Heart left ventricle (tissue), 16 donors: ENCODE measurements at regions of chr13 and their contacts with region 1.

Region 1: GRCh38 chr13:38349390-38350113 is at the start of gene UFM1:
- DNase-seq: peak; percentile 91 to 95 (median 94)
- ATAC-seq: peak; percentile 99 to 100 (median 99)
- H3K4me3 ChIP-seq: peak within 1 kb of the TSS; percentile 62 to 88 (median 81)
- H3K27ac ChIP-seq: peak within 1 kb of the TSS; percentile 82 to 93 (median 88)
- H3K4me1 ChIP-seq: peaks cover 0 to 27% (median 17%) of the 10 kb centered on the region in 12 donors
- H3K27me3 ChIP-seq: no peaks in the 10 kb centered on the region
- CTCF ChIP-seq: no peak
- POLR2A ChIP-seq: peak in 1 of 2 donors; percentile 36
- total RNA-seq, gene UFM1: 14.6 to 40.8 (median 27.9) TPM

Region 2: GRCh38 chr13:37068962-37069361 is 1280.6 kb before region 1 on chr13:
- intact Hi-C with region 1: loop called in 1 of 10 experiments (anchors 10 kb)
- DNase-seq: no peak
- ATAC-seq: no peak
- H3K4me3 ChIP-seq: no peak overlapping the region
- H3K27ac ChIP-seq: no peak overlapping the region
- H3K4me1 ChIP-seq: no peaks in the 10 kb centered on the region
- H3K27me3 ChIP-seq: no peaks in the 10 kb centered on the region
- CTCF ChIP-seq: peak in 1 of 12 donors; percentile 15
- POLR2A ChIP-seq: no peak

Region 3: GRCh38 chr13:38308736-38309135 is 40.8 kb before region 1 on chr13:
- intact Hi-C with region 1: no loop called
- DNase-seq: no peak
- ATAC-seq: no peak
- H3K4me3 ChIP-seq: no peak overlapping the region
- H3K27ac ChIP-seq: no peak overlapping the region
- H3K4me1 ChIP-seq: no peaks in the 10 kb centered on the region
- H3K27me3 ChIP-seq: no peaks in the 10 kb centered on the region
- CTCF ChIP-seq: no peak
- POLR2A ChIP-seq: no peak

Region 4: GRCh38 chr13:38417727-38418126 is 68.2 kb after region 1 on chr13:
- intact Hi-C with region 1: loop called in 1 of 10 experiments (anchors 10 kb)
- DNase-seq: no peak
- ATAC-seq: no peak
- H3K4me3 ChIP-seq: no peak overlapping the region
- H3K27ac ChIP-seq: no peak overlapping the region
- H3K4me1 ChIP-seq: peaks cover 0 to 23% (median 0%) of the 10 kb centered on the region in 12 donors
- H3K27me3 ChIP-seq: no peaks in the 10 kb centered on the region
- CTCF ChIP-seq: peak in 6 of 12 donors; percentile 11 to 38 (median 28)
- POLR2A ChIP-seq: no peak